Left ventricle myocardium inferior (tissue), 1 donor: ENCODE measurements at regions of chr6 and their contacts with region 1.

Region 1: DNA sequence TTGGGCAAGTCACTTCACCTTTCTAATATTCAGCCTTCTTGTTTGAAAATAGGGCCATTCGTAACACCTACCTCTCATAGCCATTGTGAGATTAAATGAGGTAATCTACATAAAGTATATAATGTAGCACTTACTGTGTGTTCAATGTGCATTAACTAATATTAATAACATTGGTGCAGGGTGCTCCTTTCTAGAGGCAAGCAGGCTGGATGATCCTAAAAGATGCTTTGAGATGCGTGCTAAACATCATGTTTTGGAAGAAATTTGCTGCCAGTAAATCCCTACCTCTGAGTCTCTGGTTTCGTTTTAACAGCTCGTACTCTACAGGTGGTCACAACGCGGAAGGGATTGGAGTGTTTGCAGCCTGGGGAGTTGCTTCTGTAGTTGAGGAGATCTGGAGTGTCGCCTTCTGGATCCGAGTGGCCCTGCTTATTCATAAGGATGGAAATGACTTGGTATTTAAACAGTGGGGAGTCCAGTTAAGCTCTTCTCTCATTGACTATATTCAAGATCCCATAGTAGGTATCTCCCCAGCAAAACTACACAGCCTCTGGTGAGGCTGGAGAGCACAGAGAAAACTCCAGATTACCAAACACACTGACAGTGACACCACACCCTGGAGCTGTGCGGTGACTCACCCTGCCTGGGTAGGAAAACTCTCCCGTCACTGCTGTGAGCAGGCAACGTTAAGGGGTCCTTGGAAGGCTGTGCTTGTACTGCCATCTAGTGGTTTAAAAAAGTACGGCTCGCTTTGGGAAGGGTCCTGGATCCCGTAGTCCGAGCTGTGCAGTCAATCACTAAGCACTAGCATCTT is 107.9 kb downstream of the MAP3K7 start:
- DNase-seq: peak; percentile 73
- H3K4me3 ChIP-seq: no peak overlapping the region
- H3K27ac ChIP-seq: peak overlapping the region; percentile 16
- H3K4me1 ChIP-seq: peaks cover 5% of the 10 kb centered on the region
- H3K27me3 ChIP-seq: no peaks in the 10 kb centered on the region
- CTCF ChIP-seq: peak; percentile 92

Region 2: GRCh38 chr6:89952686-89953085 is 526.3 kb before region 1 on chr6:
- intact Hi-C with region 1: loop called (anchors 10 kb)
- DNase-seq: no peak
- H3K4me3 ChIP-seq: no peak overlapping the region
- H3K27ac ChIP-seq: no peak overlapping the region
- H3K4me1 ChIP-seq: no peaks in the 10 kb centered on the region
- H3K27me3 ChIP-seq: no peaks in the 10 kb centered on the region
- CTCF ChIP-seq: no peak

Region 3: GRCh38 chr6:90403489-90404381 is 75.3 kb before region 1 on chr6:
- intact Hi-C with region 1: loop called (anchors 10 kb)
- DNase-seq: peak; percentile 43
- H3K4me3 ChIP-seq: no peak overlapping the region
- H3K27ac ChIP-seq: no peak overlapping the region
- H3K4me1 ChIP-seq: peaks cover 10% of the 10 kb centered on the region
- H3K27me3 ChIP-seq: peaks cover 35% of the 10 kb centered on the region
- CTCF ChIP-seq: no peak